PC-3 (cell line): ENCODE measurements at regions of chr1 and their contacts with region 1.

Region 1: GRCh38 chr1:204171751-204172178 is 5.6 kb upstream of the REN start:
- DNase-seq: peak; percentile 100
- ATAC-seq: peak; percentile 91
- H3K4me3 ChIP-seq: 0 out of 2 replicates have a peak overlapping the region, but pooled peaks have one; percentile 8
- H3K27ac ChIP-seq: peak overlapping the region; percentile 96
- H3K4me1 ChIP-seq: peaks cover 59% of the 10 kb centered on the region
- H3K27me3 ChIP-seq: no peaks in the 10 kb centered on the region
- CTCF ChIP-seq: no peak

Region 2: DNA sequence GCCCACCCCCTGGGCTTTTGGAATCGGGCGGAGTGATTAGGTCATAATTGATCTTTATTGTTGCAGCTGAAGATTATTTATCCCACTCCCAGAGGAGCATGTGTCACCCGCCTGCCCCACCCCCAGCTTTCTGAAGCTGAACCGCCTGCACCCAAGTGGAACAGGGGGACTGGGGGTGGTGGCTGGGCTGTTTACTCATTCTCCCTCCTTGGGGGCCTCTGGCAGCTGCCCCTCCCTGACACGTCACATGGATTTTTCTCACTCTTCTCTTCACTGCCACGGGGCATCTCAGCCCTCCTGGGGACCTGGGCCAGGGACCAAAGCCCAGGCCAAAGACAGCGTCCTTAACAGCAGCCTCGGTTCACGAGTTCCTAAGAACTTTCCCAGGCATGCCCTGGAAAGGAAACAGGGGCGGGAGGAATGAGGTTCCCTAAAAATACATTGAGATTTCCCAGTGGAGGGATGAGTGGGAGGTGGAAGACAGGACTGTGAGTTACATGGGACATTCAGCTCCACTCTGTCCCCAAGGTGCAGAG is 130.5 kb before region 1 on chr1:
- CTCF ChIA-PET with region 1: no interaction called
- POLR2A ChIA-PET with region 1: no interaction called
- intact Hi-C with region 1: no loop called
- DNase-seq: no peak
- ATAC-seq: no peak
- H3K4me3 ChIP-seq: no peak overlapping the region
- H3K27ac ChIP-seq: no peak overlapping the region
- H3K4me1 ChIP-seq: no peaks in the 10 kb centered on the region
- H3K27me3 ChIP-seq: no peaks in the 10 kb centered on the region
- CTCF ChIP-seq: no peak

Region 3: GRCh38 chr1:204190212-204191211 is 18.7 kb after region 1 on chr1:
- CTCF ChIA-PET with region 1: no interaction called
- POLR2A ChIA-PET with region 1: no interaction called
- intact Hi-C with region 1: loop called (anchors 2 kb)
- DNase-seq: peak; percentile 68
- ATAC-seq: peak; percentile 56
- H3K4me3 ChIP-seq: peak overlapping the region; percentile 35; the same call in 1 of the 2 replicates
- H3K27ac ChIP-seq: peak overlapping the region; percentile 64
- H3K4me1 ChIP-seq: peaks cover 27% of the 10 kb centered on the region
- H3K27me3 ChIP-seq: no peaks in the 10 kb centered on the region
- CTCF ChIP-seq: no peak

Region 4: GRCh38 chr1:204198151-204198994 is 26.6 kb after region 1 on chr1:
- CTCF ChIA-PET with region 1: interaction called, 6 read pairs
- POLR2A ChIA-PET with region 1: interaction called, 5 read pairs
- intact Hi-C with region 1: loop called (anchors 2 kb)
- DNase-seq: peak; percentile 98
- ATAC-seq: peak; percentile 95
- H3K4me3 ChIP-seq: no peak overlapping the region
- H3K27ac ChIP-seq: peak overlapping the region; percentile 73
- H3K4me1 ChIP-seq: peaks cover 32% of the 10 kb centered on the region
- H3K27me3 ChIP-seq: no peaks in the 10 kb centered on the region
- CTCF ChIP-seq: peak; percentile 74